Caco-2 (cell line): ENCODE measurements at regions of chr1 and their contacts with region 1.

Region 1: GRCh38 chr1:56295949-56296929 is 283.1 kb downstream of the PLPP3 start:
- DNase-seq: no peak
- H3K4me3 ChIP-seq: no peak overlapping the region
- H3K4me3 Mint-ChIP-seq: peak overlapping the region; percentile 22
- H3K27ac Mint-ChIP-seq: peak overlapping the region; percentile 93
- H3K4me1 ChIP-seq: peaks cover 58% of the 10 kb centered on the region
- H3K4me1 Mint-ChIP-seq: peaks cover 29% of the 10 kb centered on the region
- H3K27me3 ChIP-seq: no peaks in the 10 kb centered on the region
- H3K27me3 Mint-ChIP-seq: no peaks in the 10 kb centered on the region
- CTCF ChIP-seq: no peak

Region 2: DNA sequence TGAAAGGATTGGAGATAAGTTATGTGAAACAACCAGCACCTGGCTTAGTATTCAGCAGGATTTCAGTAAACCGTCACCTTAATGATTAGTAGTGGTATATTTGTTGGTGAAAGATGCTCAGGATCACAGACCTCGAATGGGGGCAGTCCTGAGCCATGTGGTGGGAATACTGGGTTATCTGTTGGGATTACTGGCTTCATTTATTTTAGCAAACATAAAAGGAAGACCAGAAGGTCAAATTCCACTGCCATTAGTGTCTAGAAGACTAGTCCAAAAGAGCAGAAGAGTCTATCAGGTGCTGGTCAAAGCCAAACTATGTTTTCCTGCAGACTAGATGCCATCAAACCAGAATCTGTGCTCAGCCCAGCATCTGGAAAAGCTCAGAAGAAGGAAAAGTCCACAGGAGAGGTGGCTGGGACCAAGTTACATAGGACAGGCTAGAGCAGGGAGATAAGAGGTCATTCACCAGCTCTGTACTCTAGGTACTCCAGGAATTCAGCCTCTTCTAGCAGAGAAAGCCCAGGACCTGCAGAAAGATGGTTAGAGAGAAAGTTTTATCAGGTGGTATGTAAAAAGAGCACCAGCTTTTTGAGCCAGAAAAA is 60.2 kb before region 1 on chr1:
- CTCF ChIA-PET with region 1: no interaction called
- POLR2A ChIA-PET with region 1: no interaction called
- intact Hi-C with region 1: loop called (anchors 1 kb)
- DNase-seq: peak; percentile 53 to 54
- H3K4me3 ChIP-seq: no peak overlapping the region
- H3K4me3 Mint-ChIP-seq: no peak overlapping the region
- H3K27ac Mint-ChIP-seq: no peak overlapping the region
- H3K4me1 ChIP-seq: peaks cover 11% of the 10 kb centered on the region
- H3K4me1 Mint-ChIP-seq: peaks cover 17% of the 10 kb centered on the region
- H3K27me3 ChIP-seq: no peaks in the 10 kb centered on the region
- H3K27me3 Mint-ChIP-seq: no peaks in the 10 kb centered on the region
- CTCF ChIP-seq: no peak

Region 3: DNA sequence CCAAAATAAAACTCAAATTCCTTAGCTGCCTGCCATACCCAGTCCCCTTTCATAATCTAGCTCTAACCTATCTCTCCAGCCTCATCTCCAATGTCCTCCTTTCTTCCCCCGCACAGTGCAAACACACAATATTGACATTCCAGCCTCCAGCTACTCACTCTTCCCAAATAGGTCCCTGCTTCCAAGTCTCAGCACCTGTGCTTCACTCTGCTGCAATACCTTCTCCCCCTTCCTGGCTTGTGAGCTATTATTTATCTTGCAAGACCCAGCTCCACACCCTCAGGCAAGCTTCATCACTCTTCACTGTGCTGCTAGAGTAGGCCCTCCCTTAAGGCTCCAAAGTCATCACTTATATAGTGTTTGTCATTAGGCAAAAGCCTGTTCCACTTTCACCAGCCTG is 273.4 kb after region 1 on chr1:
- CTCF ChIA-PET with region 1: no interaction called
- POLR2A ChIA-PET with region 1: no interaction called
- intact Hi-C with region 1: loop called (anchors 5 kb)
- DNase-seq: peak; percentile 85 to 92
- H3K4me3 ChIP-seq: no peak overlapping the region
- H3K4me3 Mint-ChIP-seq: peak overlapping the region; percentile 35
- H3K27ac Mint-ChIP-seq: peak overlapping the region; percentile 54
- H3K4me1 ChIP-seq: peaks cover 83% of the 10 kb centered on the region
- H3K4me1 Mint-ChIP-seq: peaks cover 29% of the 10 kb centered on the region
- H3K27me3 ChIP-seq: no peaks in the 10 kb centered on the region
- H3K27me3 Mint-ChIP-seq: no peaks in the 10 kb centered on the region
- CTCF ChIP-seq: no peak